Mammary epithelial cell (primary cell): ENCODE measurements at regions of chr4 and their contacts with region 1.

Region 1: GRCh38 chr4:82677321-82677720 is 115.5 kb upstream of the TMEM150C start:
- DNase-seq: no peak
- H3K4me3 ChIP-seq: no peak overlapping the region
- H3K27ac ChIP-seq: no peak overlapping the region
- H3K4me1 ChIP-seq: no peaks in the 10 kb centered on the region
- H3K27me3 ChIP-seq: no peaks in the 10 kb centered on the region
- CTCF ChIP-seq: no peak

Region 2: GRCh38 chr4:82601242-82602015 is 75.9 kb before region 1 on chr4:
- CTCF ChIA-PET with region 1: no interaction called
- dilution Hi-C with region 1: loop called (anchors 5 kb)
- in situ Hi-C with region 1: no loop called
- intact Hi-C with region 1: no loop called
- DNase-seq: no peak
- H3K4me3 ChIP-seq: no peak overlapping the region
- H3K27ac ChIP-seq: no peak overlapping the region
- H3K4me1 ChIP-seq: no peaks in the 10 kb centered on the region
- H3K27me3 ChIP-seq: peaks cover 2% of the 10 kb centered on the region
- CTCF ChIP-seq: no peak

Region 3: GRCh38 chr4:82629238-82630000 is 47.9 kb before region 1 on chr4:
- CTCF ChIA-PET with region 1: no interaction called
- dilution Hi-C with region 1: no loop called
- in situ Hi-C with region 1: no loop called
- intact Hi-C with region 1: no loop called
- DNase-seq: peak; percentile 24
- H3K4me3 ChIP-seq: no peak overlapping the region
- H3K27ac ChIP-seq: no peak overlapping the region
- H3K4me1 ChIP-seq: no peaks in the 10 kb centered on the region
- H3K27me3 ChIP-seq: no peaks in the 10 kb centered on the region
- CTCF ChIP-seq: no peak

Region 4: DNA sequence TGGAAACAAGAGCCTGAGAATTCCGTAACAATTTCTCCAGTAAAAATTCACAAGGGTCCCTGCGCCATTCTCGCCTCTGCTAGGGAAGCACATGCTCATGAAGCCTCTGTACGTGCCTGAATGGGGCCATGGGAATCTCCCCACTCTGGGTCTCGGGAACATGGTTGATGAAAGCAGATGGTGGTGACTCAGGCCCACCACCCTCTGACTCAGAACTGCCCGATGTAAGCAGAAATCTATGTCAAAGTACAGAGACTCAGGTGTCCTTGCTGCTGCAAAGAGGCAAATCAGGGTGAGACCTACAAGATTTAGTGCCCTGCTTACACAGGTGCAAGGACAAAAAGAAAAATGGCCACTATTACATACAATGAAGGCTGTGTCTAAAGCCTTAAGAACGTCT is 56.3 kb after region 1 on chr4:
- CTCF ChIA-PET with region 1: no interaction called
- dilution Hi-C with region 1: loop called (anchors 5 kb)
- in situ Hi-C with region 1: no loop called
- intact Hi-C with region 1: no loop called
- DNase-seq: peak; percentile 92
- H3K4me3 ChIP-seq: no peak overlapping the region
- H3K27ac ChIP-seq: no peak overlapping the region
- H3K4me1 ChIP-seq: peaks cover 6% of the 10 kb centered on the region
- H3K27me3 ChIP-seq: no peaks in the 10 kb centered on the region
- CTCF ChIP-seq: no peak